Calu3 (cell line): ENCODE measurements at regions of chr2 and their contacts with region 1.

Region 1: DNA sequence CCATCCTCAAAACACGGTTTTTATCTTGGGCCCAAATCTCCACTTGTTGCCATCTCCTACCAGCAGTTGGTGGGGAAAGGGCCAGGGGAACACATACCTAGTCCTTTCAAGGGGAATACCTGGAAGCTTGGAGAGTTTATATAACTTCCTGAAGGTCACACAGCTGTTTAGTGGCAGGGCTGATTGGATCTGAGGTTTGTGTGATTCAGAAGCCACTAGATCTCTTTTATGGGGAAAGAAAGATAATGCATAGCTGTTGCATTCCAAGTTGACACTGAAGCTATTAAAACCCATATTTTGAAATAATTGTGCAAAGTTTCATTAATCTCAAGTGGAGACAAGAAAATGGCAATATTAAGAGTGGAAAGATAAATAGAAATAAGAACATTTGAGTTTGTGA is 134.2 kb downstream of the PLCL1 start:
- DNase-seq: no peak
- H3K4me3 Mint-ChIP-seq: no peak overlapping the region
- H3K27ac Mint-ChIP-seq: no peak overlapping the region
- H3K4me1 Mint-ChIP-seq: no peaks in the 10 kb centered on the region
- H3K27me3 Mint-ChIP-seq: no peaks in the 10 kb centered on the region
- CTCF ChIP-seq: no peak

Region 2: DNA sequence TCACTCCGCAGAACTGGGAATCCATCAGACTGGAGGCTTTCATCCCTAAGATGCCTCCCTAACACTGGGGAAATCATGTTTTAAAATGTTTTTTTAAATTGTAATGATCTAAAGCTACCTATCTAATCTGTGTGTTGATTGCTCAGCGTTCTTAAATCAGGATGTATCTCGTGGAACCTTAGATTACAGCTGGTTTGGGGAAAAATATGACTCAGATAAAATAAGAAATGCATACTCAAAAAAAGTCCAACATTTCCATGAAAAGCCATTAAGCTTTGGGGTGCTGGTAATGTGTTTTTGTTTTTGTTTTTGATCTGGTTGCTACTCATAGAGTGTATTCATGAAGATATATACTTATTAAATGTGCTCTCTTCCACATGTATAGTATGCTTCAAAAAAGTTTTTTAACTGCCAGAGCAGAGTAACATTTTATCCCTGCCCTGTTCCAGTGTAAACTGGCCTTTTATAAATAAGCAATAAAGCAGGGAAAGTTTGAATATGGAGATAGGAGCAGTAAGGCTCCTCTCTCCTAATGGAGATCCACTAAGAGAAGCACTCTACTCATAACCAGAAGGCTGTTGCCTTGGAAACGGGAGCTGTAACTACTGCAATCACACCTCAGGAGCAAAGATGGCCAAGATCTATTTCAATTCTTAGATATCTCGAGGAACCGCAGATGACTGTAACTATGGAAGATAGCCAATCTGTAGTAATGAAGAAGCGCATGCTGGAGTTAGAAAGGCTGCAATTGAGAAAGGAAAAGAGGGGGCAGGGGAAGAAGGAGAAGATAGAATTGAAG is 669.6 kb before region 1 on chr2:
- CTCF ChIA-PET with region 1: no interaction called
- intact Hi-C with region 1: no loop called
- DNase-seq: no peak
- H3K4me3 Mint-ChIP-seq: no peak overlapping the region
- H3K27ac Mint-ChIP-seq: no peak overlapping the region
- H3K4me1 Mint-ChIP-seq: no peaks in the 10 kb centered on the region
- H3K27me3 Mint-ChIP-seq: no peaks in the 10 kb centered on the region
- CTCF ChIP-seq: no peak

Region 3: DNA sequence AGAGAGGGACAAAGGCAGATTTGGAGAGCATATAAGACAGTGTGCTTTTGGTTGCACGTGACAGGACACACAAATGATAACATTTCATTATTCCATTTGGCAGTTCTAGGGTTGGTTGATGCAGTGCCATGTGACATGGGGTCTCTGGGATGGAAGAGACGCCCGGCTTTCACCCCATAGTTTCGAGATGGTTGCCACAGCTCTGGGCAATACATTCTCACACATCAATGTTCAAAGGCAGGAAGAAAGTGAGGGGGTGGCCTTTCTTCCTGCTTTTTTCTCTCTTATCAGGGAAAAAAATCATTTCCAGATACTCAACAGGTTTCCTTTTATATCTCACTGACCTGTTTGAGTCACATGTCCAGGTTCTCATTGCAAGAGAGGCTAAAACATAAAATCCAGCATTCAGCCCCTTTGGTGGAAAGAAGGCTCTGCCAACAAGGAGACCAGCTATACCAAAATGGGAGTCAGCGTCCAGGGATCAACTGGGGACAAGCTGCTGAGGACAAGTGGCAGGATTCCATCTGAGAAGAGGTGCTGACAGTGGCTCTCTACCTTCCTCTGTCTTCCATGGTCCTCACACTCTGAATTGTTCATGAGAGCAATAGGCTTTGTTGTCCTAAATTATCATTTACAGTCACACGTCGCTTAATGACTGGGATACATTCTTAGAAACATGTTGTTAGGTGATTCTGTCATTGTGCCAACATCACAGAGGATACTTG is 598.9 kb before region 1 on chr2:
- CTCF ChIA-PET with region 1: interaction called, 13 read pairs
- intact Hi-C with region 1: no loop called
- DNase-seq: no peak
- H3K4me3 Mint-ChIP-seq: no peak overlapping the region
- H3K27ac Mint-ChIP-seq: no peak overlapping the region
- H3K4me1 Mint-ChIP-seq: no peaks in the 10 kb centered on the region
- H3K27me3 Mint-ChIP-seq: no peaks in the 10 kb centered on the region
- CTCF ChIP-seq: no peak